CD8-positive, alpha-beta T cell (primary cell): ENCODE measurements at regions of chr6 and their contacts with region 1.

Region 1: DNA sequence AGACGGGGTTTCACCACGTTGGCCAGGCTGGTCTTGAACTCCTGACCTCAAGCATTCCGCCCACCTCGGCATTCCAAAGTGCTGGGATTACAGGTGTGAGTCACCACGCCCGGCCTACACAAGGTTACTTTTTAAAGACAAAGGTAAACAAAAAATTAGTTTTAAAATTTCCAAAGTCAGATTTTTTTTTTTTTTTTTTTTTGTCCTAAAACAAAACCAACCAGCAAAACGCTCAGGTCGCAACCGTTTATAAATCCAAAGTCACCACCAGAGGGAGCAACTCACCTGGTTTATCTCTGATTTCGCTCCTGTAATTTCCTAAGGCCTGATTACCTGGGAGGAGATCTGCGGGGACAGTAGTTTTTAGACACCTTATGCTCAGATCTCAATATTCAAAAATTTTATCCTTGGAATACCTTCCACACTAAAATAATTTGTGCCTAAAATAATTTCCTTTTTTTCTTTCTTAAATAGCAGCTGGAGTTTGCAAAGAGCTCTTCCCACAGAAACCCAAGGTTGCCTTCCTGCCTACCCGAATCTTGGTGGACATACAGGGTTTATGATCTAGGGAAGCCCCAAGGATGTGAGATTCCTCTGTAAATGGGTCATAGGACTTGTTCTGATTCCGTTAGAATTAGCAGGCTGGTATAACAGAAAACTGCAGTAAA is 19.8 kb upstream of the TREM1 start:
- DNase-seq: peak in 7 of 9 experiments; percentile 19 to 78 (median 34)
- ATAC-seq: no peak
- H3K4me3 ChIP-seq: no peak overlapping the region
- H3K4me3 Mint-ChIP-seq: no peak overlapping the region
- H3K27ac ChIP-seq: no peak overlapping the region
- H3K27ac Mint-ChIP-seq: no peak overlapping the region
- H3K4me1 ChIP-seq: peaks cover 4% of the 10 kb centered on the region
- H3K4me1 Mint-ChIP-seq: peaks cover 13% of the 10 kb centered on the region
- H3K27me3 ChIP-seq: no peaks in the 10 kb centered on the region
- H3K27me3 Mint-ChIP-seq: no peaks in the 10 kb centered on the region
- CTCF ChIP-seq: peak; percentile 79

Region 2: DNA sequence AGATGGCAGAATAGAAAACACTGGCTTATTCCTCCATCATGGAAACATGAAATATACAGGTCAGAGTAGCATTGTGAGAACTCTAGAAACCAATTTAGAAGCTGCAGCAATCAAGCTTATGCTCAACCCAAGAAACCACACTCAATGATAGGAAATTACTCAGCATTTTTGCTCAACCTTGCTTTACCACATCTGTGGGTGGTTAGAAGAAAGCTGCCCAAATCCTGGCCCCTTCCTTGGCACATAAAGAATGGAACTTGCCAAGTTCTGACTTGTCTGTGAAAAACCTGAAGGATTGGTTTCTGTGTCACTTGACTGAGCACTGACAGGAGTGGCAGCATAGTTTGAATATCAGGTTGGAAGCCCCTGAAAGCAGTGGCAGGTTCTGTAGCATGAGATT is 1264.1 kb before region 1 on chr6:
- CTCF ChIA-PET with region 1: no interaction called
- POLR2A ChIA-PET with region 1: no interaction called
- intact Hi-C with region 1: no loop called
- DNase-seq: no peak
- ATAC-seq: no peak
- H3K4me3 ChIP-seq: no peak overlapping the region
- H3K4me3 Mint-ChIP-seq: no peak overlapping the region
- H3K27ac ChIP-seq: no peak overlapping the region
- H3K27ac Mint-ChIP-seq: no peak overlapping the region
- H3K4me1 ChIP-seq: no peaks in the 10 kb centered on the region
- H3K4me1 Mint-ChIP-seq: no peaks in the 10 kb centered on the region
- H3K27me3 ChIP-seq: no peaks in the 10 kb centered on the region
- H3K27me3 Mint-ChIP-seq: peaks cover 15% of the 10 kb centered on the region
- CTCF ChIP-seq: no peak

Region 3: GRCh38 chr6:41111036-41111435 is 195.3 kb before region 1 on chr6:
- CTCF ChIA-PET with region 1: no interaction called
- POLR2A ChIA-PET with region 1: no interaction called
- intact Hi-C with region 1: no loop called
- DNase-seq: no peak
- ATAC-seq: no peak
- H3K4me3 ChIP-seq: no peak overlapping the region
- H3K4me3 Mint-ChIP-seq: no peak overlapping the region
- H3K27ac ChIP-seq: no peak overlapping the region
- H3K27ac Mint-ChIP-seq: no peak overlapping the region
- H3K4me1 ChIP-seq: no peaks in the 10 kb centered on the region
- H3K4me1 Mint-ChIP-seq: no peaks in the 10 kb centered on the region
- H3K27me3 ChIP-seq: no peaks in the 10 kb centered on the region
- H3K27me3 Mint-ChIP-seq: no peaks in the 10 kb centered on the region
- CTCF ChIP-seq: no peak

Region 4: DNA sequence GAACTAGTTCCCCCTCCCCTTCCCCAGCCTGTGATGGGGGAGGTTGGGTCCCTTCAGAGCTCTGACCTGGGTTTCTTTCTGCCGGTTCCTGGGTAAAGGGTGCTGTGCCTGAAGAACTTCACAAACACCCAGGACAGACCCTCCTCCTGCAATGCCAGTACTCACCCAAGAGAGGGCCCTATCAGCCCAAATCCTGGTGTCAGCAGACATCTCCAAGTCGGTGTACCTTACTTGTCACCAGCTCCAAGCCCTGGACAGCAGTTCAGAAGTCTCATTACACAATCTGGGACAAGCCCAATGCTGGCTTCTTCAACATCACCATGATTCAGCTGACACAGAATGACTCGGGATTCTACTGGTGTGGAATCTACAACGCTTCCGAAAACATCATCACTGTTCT is 77.7 kb before region 1 on chr6:
- CTCF ChIA-PET with region 1: no interaction called
- POLR2A ChIA-PET with region 1: no interaction called
- intact Hi-C with region 1: no loop called
- DNase-seq: peak in 1 of 9 experiments; percentile 37
- ATAC-seq: no peak
- H3K4me3 ChIP-seq: no peak overlapping the region
- H3K4me3 Mint-ChIP-seq: no peak overlapping the region
- H3K27ac ChIP-seq: no peak overlapping the region
- H3K27ac Mint-ChIP-seq: no peak overlapping the region
- H3K4me1 ChIP-seq: no peaks in the 10 kb centered on the region
- H3K4me1 Mint-ChIP-seq: no peaks in the 10 kb centered on the region
- H3K27me3 ChIP-seq: no peaks in the 10 kb centered on the region
- H3K27me3 Mint-ChIP-seq: peaks cover 7% of the 10 kb centered on the region
- CTCF ChIP-seq: no peak

Region 5: GRCh38 chr6:41278699-41279405 is 27.5 kb before region 1 on chr6:
- CTCF ChIA-PET with region 1: interaction called, 13 read pairs
- POLR2A ChIA-PET with region 1: interaction called, 3 read pairs
- intact Hi-C with region 1: no loop called
- DNase-seq: peak; percentile 35 to 84 (median 63)
- ATAC-seq: peak; percentile 73
- H3K4me3 ChIP-seq: no peak overlapping the region
- H3K4me3 Mint-ChIP-seq: no peak overlapping the region
- H3K27ac ChIP-seq: no peak overlapping the region
- H3K27ac Mint-ChIP-seq: no peak overlapping the region
- H3K4me1 ChIP-seq: peaks cover 8% of the 10 kb centered on the region
- H3K4me1 Mint-ChIP-seq: peaks cover 10% of the 10 kb centered on the region
- H3K27me3 ChIP-seq: no peaks in the 10 kb centered on the region
- H3K27me3 Mint-ChIP-seq: peaks cover 7% of the 10 kb centered on the region
- CTCF ChIP-seq: peak; percentile 47

Region 6: GRCh38 chr6:41289815-41290214 is 16.5 kb before region 1 on chr6:
- CTCF ChIA-PET with region 1: interaction called, 11 read pairs
- POLR2A ChIA-PET with region 1: no interaction called
- intact Hi-C with region 1: no loop called
- DNase-seq: no peak
- ATAC-seq: no peak
- H3K4me3 ChIP-seq: no peak overlapping the region
- H3K4me3 Mint-ChIP-seq: no peak overlapping the region
- H3K27ac ChIP-seq: no peak overlapping the region
- H3K27ac Mint-ChIP-seq: no peak overlapping the region
- H3K4me1 ChIP-seq: no peaks in the 10 kb centered on the region
- H3K4me1 Mint-ChIP-seq: peaks cover 3% of the 10 kb centered on the region
- H3K27me3 ChIP-seq: no peaks in the 10 kb centered on the region
- H3K27me3 Mint-ChIP-seq: peaks cover 2% of the 10 kb centered on the region
- CTCF ChIP-seq: no peak